Endothelial cell of umbilical vein (primary cell): ENCODE measurements at regions of chr7 and their contacts with region 1.

Region 1: DNA sequence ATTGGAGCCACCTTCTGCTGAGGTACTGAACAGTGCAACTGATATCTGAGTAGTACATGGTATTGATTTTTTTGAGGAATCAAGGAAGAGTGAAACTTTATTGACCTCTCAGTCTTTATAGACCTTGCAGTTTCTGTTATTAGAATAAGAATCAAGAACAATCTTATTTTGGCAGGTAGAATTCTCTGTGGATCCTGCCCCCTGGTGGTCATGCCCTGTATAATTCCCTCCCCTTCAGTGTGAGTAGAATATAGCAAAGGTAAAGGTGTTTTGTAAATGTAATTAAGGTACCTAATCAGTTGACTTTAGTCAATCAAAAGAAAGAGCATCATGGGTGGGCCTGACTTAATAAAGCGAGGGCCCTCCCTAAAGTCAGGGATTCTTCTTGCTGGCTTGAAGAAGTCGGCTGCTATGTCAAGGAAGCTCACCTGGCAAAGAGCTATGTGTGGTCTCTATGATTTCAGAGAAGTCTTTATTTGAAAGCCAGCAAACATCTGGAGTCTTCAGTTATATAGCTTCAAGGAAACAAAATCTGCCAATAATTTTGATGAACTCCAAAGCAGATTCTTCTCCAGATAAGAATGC is 142.8 kb downstream of the LSM5 start:
- DNase-seq: peak; percentile 40
- H3K4me3 ChIP-seq: no peak overlapping the region
- H3K27ac ChIP-seq: no peak overlapping the region
- H3K4me1 ChIP-seq: no peaks in the 10 kb centered on the region
- H3K27me3 ChIP-seq: no peaks in the 10 kb centered on the region
- CTCF ChIP-seq: peak; percentile 40 to 51
- POLR2A ChIP-seq: no peak

Region 2: DNA sequence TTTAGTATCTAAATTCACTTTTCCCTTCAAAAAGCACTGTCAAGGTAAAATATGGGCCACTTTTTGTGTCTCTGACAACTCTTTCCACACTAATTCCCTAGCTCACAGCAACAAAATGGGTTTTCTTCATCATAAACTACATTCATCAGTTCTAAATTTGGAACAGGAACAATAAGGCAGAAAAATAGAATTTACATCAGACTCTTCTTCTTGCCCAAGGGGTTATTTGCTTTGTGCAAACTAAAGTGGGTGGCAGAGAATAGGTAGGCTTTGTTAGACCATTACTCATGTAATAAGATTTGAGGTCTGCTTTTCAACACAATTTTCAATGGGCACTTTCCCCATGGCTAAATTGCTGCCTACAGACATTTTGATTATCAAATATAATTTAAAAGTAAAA is 677.9 kb before region 1 on chr7:
- CTCF ChIA-PET with region 1: no interaction called
- POLR2A ChIA-PET with region 1: no interaction called
- dilution Hi-C with region 1: no loop called
- intact Hi-C with region 1: no loop called
- DNase-seq: no peak
- H3K4me3 ChIP-seq: no peak overlapping the region
- H3K27ac ChIP-seq: no peak overlapping the region
- H3K4me1 ChIP-seq: no peaks in the 10 kb centered on the region
- H3K27me3 ChIP-seq: no peaks in the 10 kb centered on the region
- CTCF ChIP-seq: no peak
- POLR2A ChIP-seq: no peak

Region 3: DNA sequence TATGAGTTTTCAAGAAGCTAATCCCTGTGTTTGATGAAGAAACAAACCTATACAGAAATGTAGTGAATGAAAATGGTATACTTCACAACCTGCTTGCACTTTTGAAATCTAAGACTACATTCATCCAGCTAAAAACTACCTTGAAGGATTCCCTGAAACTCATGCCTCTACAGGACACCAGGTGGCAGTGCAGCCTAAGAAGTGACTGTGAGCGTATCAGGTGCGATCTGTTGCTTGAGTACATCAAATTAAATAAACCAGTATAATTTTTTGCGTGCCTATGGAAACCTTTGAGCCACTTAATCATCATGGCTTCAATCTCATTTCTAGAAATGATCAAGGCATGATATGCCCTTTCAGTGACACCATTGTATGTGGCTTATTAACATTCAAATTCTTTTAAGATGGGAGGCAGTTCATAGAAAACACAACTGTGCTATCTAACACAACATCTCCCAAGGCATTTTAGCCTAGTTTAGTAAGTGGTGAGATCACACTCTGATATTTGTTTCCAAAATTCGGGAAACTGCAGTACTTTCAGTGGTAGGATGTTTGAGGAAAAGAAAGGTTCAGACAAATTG is 603.0 kb before region 1 on chr7:
- CTCF ChIA-PET with region 1: interaction called, 26 read pairs
- POLR2A ChIA-PET with region 1: no interaction called
- dilution Hi-C with region 1: no loop called
- intact Hi-C with region 1: loop called (anchors 2 kb)
- DNase-seq: peak; percentile 79
- H3K4me3 ChIP-seq: no peak overlapping the region
- H3K27ac ChIP-seq: no peak overlapping the region
- H3K4me1 ChIP-seq: no peaks in the 10 kb centered on the region
- H3K27me3 ChIP-seq: peaks cover 3 to 5% of the 10 kb centered on the region in 2 experiments
- CTCF ChIP-seq: peak; percentile 63 to 71
- POLR2A ChIP-seq: no peak

Region 4: DNA sequence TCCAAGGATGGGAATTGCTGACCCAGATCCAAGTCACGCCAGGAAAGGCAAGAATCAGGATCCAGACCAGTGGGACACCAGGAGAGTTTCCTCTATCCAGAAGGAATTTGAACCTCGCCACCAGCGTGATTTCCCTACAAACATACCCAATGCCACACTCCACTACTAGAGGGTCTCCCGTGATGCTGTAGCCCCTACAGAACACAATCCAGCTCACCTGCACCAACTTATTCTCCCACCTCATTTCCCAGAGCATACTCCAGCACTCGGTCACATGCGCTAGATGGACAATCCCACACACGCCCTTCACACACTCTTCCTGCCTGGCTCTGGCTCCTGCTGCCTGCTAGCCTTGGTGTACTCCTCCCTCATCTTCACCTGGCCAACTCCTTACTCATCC is 135.0 kb before region 1 on chr7:
- CTCF ChIA-PET with region 1: interaction called, 101 read pairs
- POLR2A ChIA-PET with region 1: no interaction called
- dilution Hi-C with region 1: no loop called
- intact Hi-C with region 1: loop called (anchors 2 kb)
- DNase-seq: no peak
- H3K4me3 ChIP-seq: no peak overlapping the region
- H3K27ac ChIP-seq: no peak overlapping the region
- H3K4me1 ChIP-seq: no peaks in the 10 kb centered on the region
- H3K27me3 ChIP-seq: peaks cover 0 to 3% of the 10 kb centered on the region in 2 experiments
- CTCF ChIP-seq: no peak
- POLR2A ChIP-seq: no peak

Region 5: GRCh38 chr7:32223721-32224120 is 123.6 kb before region 1 on chr7:
- CTCF ChIA-PET with region 1: no interaction called
- POLR2A ChIA-PET with region 1: no interaction called
- dilution Hi-C with region 1: no loop called
- intact Hi-C with region 1: no loop called
- DNase-seq: no peak
- H3K4me3 ChIP-seq: no peak overlapping the region
- H3K27ac ChIP-seq: no peak overlapping the region
- H3K4me1 ChIP-seq: no peaks in the 10 kb centered on the region
- H3K27me3 ChIP-seq: no peaks in the 10 kb centered on the region
- CTCF ChIP-seq: no peak
- POLR2A ChIP-seq: no peak

Region 6: GRCh38 chr7:32335107-32335506 is 12.2 kb before region 1 on chr7:
- CTCF ChIA-PET with region 1: interaction called, 10 read pairs
- POLR2A ChIA-PET with region 1: no interaction called
- dilution Hi-C with region 1: no loop called
- intact Hi-C with region 1: no loop called
- DNase-seq: no peak
- H3K4me3 ChIP-seq: no peak overlapping the region
- H3K27ac ChIP-seq: no peak overlapping the region
- H3K4me1 ChIP-seq: no peaks in the 10 kb centered on the region
- H3K27me3 ChIP-seq: no peaks in the 10 kb centered on the region
- CTCF ChIP-seq: no peak
- POLR2A ChIP-seq: no peak

Region 7: DNA sequence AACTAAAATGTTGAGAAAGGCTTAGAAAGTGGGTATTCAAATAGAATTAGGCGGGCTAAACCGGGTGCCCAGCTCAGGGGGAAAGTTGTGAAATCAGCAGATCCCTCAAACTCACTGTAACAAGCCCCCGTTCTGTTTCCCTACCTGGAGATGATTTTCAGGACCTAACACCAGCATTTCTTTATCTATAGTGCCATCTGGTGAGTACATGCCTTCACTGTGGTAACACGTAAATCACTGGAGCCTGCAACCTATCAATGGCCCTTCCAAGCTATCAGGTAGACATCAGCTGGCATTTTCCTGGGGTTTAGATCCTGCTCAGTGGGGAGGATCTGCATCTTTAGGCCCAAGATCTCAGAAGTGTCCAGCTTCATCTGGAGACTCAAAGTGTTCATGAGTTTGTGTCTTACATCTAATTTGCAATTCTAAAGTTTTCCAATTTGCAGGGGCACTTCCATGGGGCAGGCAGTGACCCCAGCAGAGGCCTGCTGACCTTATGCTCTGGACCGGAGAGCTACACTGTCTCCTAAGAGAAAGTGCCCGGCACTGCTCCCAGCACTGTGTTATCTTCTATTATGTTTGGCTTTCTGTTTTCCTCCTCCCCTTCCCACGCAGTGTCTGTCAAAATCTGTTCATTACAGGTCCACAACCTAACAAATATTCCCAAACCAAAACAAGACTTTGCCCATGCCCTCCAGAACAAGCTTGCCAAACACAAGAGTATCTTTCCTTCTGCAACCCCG is 10.4 kb after region 1 on chr7:
- CTCF ChIA-PET with region 1: interaction called, 14 read pairs
- POLR2A ChIA-PET with region 1: no interaction called
- dilution Hi-C with region 1: no loop called
- intact Hi-C with region 1: no loop called
- DNase-seq: no peak
- H3K4me3 ChIP-seq: no peak overlapping the region
- H3K27ac ChIP-seq: no peak overlapping the region
- H3K4me1 ChIP-seq: no peaks in the 10 kb centered on the region
- H3K27me3 ChIP-seq: no peaks in the 10 kb centered on the region
- CTCF ChIP-seq: no peak
- POLR2A ChIP-seq: no peak

Region 8: DNA sequence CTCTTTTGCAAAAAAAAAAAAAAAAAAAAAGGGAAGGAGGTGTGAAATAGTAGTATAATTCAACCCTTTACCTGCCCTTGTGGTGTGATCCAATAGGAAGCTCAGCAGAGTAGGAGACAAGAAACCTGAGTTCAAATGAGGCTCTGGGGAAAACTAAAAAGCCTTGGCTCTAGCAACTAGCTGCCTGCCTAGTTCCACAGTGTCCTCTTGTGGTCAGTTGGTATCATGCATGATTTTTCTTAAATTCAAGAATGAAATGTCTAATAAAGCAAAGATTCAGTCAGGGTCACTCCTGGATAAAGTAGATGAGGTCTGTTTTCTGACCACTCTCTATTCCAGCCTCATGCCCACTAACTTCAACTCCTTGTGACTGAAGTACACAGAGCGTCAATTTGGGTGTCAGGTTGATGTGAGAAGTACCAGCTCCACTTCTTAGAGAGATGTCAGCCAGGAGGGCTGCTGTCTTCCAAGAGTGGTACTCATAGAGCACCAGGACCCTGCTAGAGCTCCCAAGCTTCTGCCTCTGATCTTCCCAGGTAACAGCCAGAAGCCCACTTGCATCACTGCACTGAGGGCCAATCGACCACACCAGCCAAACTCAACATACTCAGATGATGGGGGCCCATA is 132.4 kb after region 1 on chr7:
- CTCF ChIA-PET with region 1: interaction called, 3 read pairs
- POLR2A ChIA-PET with region 1: no interaction called
- dilution Hi-C with region 1: no loop called
- intact Hi-C with region 1: loop called (anchors 5 kb)
- DNase-seq: peak; percentile 44
- H3K4me3 ChIP-seq: no peak overlapping the region
- H3K27ac ChIP-seq: no peak overlapping the region
- H3K4me1 ChIP-seq: peaks cover 6% of the 10 kb centered on the region
- H3K27me3 ChIP-seq: peaks cover 0 to 3% of the 10 kb centered on the region in 2 experiments
- CTCF ChIP-seq: peak; percentile 77 to 80
- POLR2A ChIP-seq: no peak